Dorsolateral prefrontal cortex (tissue), 120 donors: ENCODE measurements at regions of chr17 and their contacts with region 1.

Region 1: GRCh38 chr17:35568541-35568940 is 7.9 kb upstream of the SLFN14 start:
- DNase-seq: no peak
- H3K4me3 ChIP-seq: peak overlapping the region; percentile 51 to 98 (median 85)
- H3K27ac ChIP-seq: peak overlapping the region in 13 of 59 donors; percentile 12 to 89 (median 78)
- H3K27me3 ChIP-seq: no peaks in the 10 kb centered on the region
- CTCF ChIP-seq: no peak

Region 2: DNA sequence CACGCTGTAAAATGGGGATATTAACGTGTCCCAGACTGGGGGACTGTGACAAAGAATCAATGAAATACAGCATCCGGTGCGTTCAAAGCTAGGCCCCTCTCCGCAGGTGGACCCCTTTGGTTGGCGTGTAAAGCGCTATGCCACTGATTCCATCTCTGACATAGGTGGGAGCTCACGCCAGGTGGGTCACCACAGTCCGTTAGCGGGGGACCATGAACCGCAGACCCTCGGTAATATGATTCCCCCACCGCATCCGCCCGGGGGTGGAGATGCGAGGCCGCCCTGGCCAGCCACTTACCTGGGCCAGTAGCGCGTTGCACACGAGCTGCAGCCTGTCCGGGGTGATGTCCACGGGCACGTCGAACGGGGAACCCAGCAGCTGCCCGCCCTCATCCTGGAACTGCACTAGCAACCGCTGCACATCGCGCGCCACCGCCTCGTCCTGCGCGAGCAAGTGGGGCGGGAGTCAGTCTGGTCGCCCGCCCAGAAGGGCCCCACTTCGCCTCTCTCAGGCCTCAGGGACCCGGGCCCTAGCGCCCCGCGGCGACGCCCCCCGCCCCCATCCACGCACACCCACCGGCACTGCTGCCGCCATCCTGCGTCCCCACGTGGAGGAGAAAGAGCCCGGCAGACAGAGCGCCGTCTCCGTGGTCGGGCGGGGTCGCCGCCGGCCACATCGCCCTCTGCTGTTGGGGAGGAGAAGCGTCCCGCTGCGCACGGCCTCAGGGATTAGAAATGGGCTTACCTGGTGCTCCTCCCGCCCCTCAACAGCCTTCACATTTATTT is 426.7 kb before region 1 on chr17 and contains the start of gene NLE1:
- intact Hi-C with region 1: loop called in 1 of 2 experiments (anchors 10 kb)
- DNase-seq: peak; percentile 69 to 89 (median 79)
- H3K4me3 ChIP-seq: peak within 1 kb of the TSS; percentile 57 to 99 (median 91)
- H3K27ac ChIP-seq: peak within 1 kb of the TSS in 9 of 59 donors; percentile 14 to 80 (median 57)
- H3K27me3 ChIP-seq: no peaks in the 10 kb centered on the region
- CTCF ChIP-seq: peak; percentile 75 to 98 (median 94)
- total RNA-seq, gene NLE1: 8.0 to 21.0 (median 15.2) TPM

Region 3: DNA sequence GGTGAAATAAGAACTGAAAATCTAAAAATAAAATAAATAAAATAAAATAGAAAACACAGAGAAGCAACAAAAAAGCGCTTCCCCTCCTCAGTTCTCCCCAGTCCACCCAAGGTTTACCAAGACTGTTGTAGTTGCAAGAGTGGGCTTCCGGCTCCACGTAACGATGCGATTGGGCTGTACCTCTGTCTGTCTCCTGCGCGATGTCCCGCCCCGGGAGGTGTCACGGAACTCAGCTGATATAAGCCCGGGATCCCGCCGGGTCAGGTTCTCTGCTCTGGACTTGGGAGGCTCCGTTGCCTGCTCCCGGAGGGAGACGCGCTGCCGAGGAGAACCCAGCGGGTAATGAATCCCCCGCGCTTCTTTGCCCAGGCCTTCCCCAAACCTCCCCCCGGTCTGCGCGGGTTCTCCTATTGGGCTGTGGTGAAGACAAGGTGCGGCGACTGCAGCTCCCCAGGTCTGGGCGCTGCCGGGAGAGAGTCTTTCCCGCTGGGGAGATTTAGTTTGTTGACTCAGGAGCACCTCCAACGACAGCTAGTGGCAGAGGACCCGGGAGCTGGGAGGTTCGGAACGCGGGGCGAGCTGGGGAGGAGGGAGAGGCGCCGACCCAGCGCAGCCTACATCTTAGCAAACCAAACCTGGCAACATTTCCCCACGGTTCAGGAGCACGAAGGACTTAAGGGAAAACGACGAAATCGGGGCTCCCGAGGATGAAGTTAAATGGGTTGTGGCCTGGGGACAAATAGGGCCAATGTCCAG is 325.6 kb before region 1 on chr17 and contains the start of gene SLFN5:
- intact Hi-C with region 1: loop called in 1 of 2 experiments (anchors 10 kb)
- DNase-seq: peak; percentile 81 to 96 (median 88)
- H3K4me3 ChIP-seq: peak within 1 kb of the TSS; percentile 53 to 94 (median 77)
- H3K27ac ChIP-seq: peak within 1 kb of the TSS in 58 of 59 donors; percentile 1 to 93 (median 83)
- H3K27me3 ChIP-seq: peaks cover 0 to 4% (median 0%) of the 10 kb centered on the region in 45 donors
- CTCF ChIP-seq: peak in 2 of 56 donors; percentile 2 to 6
- total RNA-seq, gene SLFN5: 3.2 to 21.5 (median 10.2) TPM

Region 4: DNA sequence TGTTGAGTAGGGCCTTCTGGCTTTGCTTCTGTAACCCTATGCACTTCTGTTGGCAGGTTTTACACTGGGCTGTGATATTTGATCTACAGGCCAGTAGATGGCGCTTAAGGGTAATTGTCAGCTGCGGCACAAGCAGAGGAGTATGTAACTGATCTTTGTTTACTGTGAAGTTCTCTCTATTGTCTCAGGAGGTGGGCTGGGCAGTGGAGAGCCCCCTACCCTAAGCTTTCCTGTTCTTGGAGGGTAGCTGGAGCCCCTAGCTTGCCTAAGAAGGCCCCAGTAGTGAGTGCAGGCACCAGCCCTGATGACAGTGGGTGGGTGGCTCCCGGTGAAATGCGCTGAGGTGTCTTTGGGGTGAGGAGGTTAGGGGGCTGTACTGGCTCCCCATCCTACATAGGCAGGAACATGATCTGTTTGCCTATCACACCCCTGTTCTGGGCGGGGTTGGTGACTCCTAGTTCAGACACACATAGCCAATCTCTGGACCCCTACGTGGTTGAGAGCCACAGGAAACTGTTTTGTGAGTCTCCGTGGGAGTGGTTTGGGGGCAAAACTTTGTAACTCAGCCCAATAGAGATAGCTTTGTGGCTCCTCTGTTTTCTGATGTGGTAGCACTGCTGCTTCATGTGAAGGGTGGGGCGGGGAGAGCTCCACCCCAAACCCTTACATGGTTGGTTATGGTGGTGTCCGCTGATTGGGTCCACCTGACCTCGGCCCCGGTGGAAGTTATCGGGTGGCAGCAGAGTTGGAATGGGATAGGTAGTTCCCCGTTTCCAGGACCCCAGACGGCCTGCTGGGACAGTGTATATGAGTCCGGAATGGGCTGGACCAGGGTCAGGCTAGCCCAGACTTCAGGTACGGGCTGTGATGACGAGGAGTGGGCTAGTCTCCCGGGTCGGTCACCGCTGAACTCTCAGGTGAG is 255.5 kb before region 1 on chr17:
- intact Hi-C with region 1: no loop called
- DNase-seq: peak in 2 of 10 donors; percentile 15 to 17
- H3K4me3 ChIP-seq: peak overlapping the region in 57 of 59 donors; percentile 0 to 57 (median 36)
- H3K27ac ChIP-seq: peak overlapping the region in 11 of 59 donors; percentile 2 to 71 (median 31)
- H3K27me3 ChIP-seq: peaks cover 0 to 20% (median 8%) of the 10 kb centered on the region in 45 donors
- CTCF ChIP-seq: peak; percentile 45 to 88 (median 76)

Region 5: DNA sequence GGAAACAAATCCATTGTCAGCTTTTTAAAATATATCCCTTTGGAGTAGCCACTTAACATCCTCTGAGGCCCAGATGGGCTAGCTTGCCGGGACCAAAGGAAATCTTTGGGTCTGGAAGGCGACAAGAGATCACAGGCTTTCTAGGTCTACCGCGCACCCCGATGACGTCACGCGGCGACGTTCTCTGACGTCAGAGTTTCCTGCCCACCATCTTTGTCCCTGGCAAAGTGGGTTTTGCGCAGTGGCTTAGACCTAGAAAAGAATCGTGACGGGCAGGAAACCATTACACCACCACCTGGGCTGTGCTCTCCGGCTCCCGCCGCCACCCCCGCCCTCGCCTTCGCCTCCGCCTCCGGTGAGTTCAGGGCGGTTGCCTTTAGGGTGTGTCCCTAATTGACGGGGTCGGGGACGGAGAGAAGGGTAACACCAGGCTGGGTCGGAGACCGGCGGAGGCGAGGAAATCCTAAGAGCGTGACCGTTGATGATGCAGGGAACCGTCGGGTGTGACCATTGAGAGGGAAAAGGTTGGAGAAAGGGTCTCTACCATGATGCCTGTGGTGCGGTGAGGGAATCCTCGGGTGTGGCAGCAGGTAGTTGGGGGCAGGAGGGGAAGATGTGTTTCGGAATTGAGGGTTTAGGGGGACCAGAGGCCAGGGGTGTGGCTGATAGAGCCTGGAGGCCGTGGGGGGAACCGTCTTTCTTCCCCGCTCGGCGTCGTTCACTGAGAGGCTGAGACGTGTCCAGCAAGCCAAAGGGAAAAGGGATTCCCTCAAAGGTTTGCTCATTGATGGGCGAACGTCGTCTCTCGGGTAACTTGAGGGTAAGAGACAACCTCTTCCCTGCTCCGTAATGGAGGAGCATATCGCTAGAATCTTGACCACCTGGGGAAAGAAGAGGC is 18.8 kb after region 1 on chr17 and contains the start of gene AP2B1:
- intact Hi-C with region 1: loop called in 1 of 2 experiments (anchors 2 kb)
- DNase-seq: peak; percentile 82 to 93 (median 90)
- H3K4me3 ChIP-seq: peak within 1 kb of the TSS; percentile 71 to 99 (median 90)
- H3K27ac ChIP-seq: peak within 1 kb of the TSS in 57 of 59 donors; percentile 19 to 95 (median 87)
- H3K27me3 ChIP-seq: no peaks in the 10 kb centered on the region
- CTCF ChIP-seq: peak in 22 of 56 donors; percentile 6 to 47 (median 20)
- total RNA-seq, gene AP2B1: 169 to 394 (median 287) TPM